ENCODE measurements at regions of chr9 and their contacts with region 1.

Region 1: GRCh38 chr9:22008736-22009562 is at the start of gene CDKN2B:
- DNase-seq: peak; percentile 66
- H3K4me3 Mint-ChIP-seq: peak within 1 kb of the TSS; percentile 84
- H3K27ac Mint-ChIP-seq: no peak within 1 kb of the TSS
- H3K4me1 Mint-ChIP-seq: peaks cover 27% of the 10 kb centered on the region
- H3K27me3 Mint-ChIP-seq: peaks cover 69% of the 10 kb centered on the region
- total RNA-seq, gene CDKN2B: 0.62 and 0.69 TPM in 2 replicates

Region 2: DNA sequence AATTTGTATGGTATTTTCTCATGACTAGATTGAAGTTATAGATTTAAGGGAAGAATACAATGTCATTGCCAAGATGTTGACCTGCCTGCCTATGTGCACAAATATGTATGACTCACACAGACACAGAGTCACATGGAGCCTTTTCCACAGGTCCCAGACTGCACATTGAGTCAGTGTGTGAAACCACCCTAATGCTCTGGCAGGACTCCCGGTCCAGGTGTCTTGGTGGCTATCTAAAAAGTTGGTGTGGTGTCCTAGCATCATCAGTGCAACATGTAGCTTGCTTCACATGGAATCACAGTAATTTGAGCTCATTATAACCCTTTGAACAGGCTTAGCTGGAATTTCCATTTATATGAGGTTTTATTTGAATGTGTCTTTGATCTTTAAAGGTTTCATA is 714.6 kb before region 1 on chr9:
- intact Hi-C with region 1: no loop called
- DNase-seq: no peak
- H3K4me3 Mint-ChIP-seq: no peak overlapping the region
- H3K27ac Mint-ChIP-seq: no peak overlapping the region
- H3K4me1 Mint-ChIP-seq: peaks cover 5% of the 10 kb centered on the region
- H3K27me3 Mint-ChIP-seq: peaks cover 35% of the 10 kb centered on the region

Region 3: GRCh38 chr9:21761309-21761901 is 247.5 kb before region 1 on chr9:
- intact Hi-C with region 1: loop called (anchors 1 kb)
- DNase-seq: peak; percentile 29
- H3K4me3 Mint-ChIP-seq: no peak overlapping the region
- H3K27ac Mint-ChIP-seq: no peak overlapping the region
- H3K4me1 Mint-ChIP-seq: peaks cover 14% of the 10 kb centered on the region
- H3K27me3 Mint-ChIP-seq: peaks cover 69% of the 10 kb centered on the region

Region 4: GRCh38 chr9:21965401-21965951 is 43.5 kb before region 1 on chr9:
- intact Hi-C with region 1: loop called (anchors 1 kb)
- DNase-seq: peak; percentile 44
- H3K4me3 Mint-ChIP-seq: peak overlapping the region; percentile 63
- H3K27ac Mint-ChIP-seq: no peak overlapping the region
- H3K4me1 Mint-ChIP-seq: peaks cover 25% of the 10 kb centered on the region
- H3K27me3 Mint-ChIP-seq: peaks cover 87% of the 10 kb centered on the region

Region 5: GRCh38 chr9:21995177-21996086 is 13.5 kb before region 1 on chr9:
- intact Hi-C with region 1: loop called (anchors 1 kb)
- DNase-seq: peak; percentile 82
- H3K4me3 Mint-ChIP-seq: peak overlapping the region; percentile 91
- H3K27ac Mint-ChIP-seq: peak overlapping the region; percentile 81
- H3K4me1 Mint-ChIP-seq: peaks cover 27% of the 10 kb centered on the region
- H3K27me3 Mint-ChIP-seq: peaks cover 38% of the 10 kb centered on the region

Region 6: DNA sequence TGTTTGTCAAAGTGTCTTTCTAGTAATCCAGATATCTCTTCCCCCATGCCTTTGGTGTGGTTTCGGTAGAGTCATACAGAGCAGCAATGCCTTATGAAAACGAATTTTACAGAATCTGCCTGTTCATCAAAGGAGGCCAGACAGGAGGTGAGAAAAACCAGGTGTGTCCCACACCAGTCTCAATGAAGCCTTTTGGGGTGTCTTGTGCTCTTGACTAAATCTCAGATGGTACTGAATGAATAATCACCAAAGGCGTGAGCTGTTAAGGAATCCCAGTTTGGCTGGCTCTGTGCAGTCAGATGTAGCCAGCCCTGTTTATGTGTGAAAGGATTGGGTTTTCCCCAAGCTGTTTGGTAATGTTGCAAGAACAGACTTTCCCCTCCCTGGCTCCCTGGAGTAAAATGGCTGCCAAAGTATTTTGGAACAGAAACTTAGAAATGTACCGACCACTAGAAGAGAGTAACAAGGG is 71.0 kb after region 1 on chr9:
- intact Hi-C with region 1: loop called (anchors 2 kb)
- DNase-seq: peak; percentile 58
- H3K4me3 Mint-ChIP-seq: peak overlapping the region; percentile 34
- H3K27ac Mint-ChIP-seq: peak overlapping the region; percentile 46
- H3K4me1 Mint-ChIP-seq: peaks cover 52% of the 10 kb centered on the region
- H3K27me3 Mint-ChIP-seq: peaks cover 36% of the 10 kb centered on the region